ENCODE measurements at regions of chr12 and their contacts with region 1.

Region 1: GRCh38 chr12:119412811-119413794 is 78.6 kb downstream of the CCDC60 start:
- DNase-seq: peak; percentile 65 to 75 (median 73)
- ATAC-seq: peak; percentile 79
- H3K4me3 ChIP-seq: no peak overlapping the region
- H3K27ac ChIP-seq: no peak overlapping the region
- H3K4me1 ChIP-seq: no peaks in the 10 kb centered on the region
- H3K27me3 ChIP-seq: peaks cover 0 to 5% of the 10 kb centered on the region in 2 experiments; a peak in 2 of 5 replicates
- CTCF ChIP-seq: peak; percentile 76 to 87 (median 85)
- EP300 ChIP-seq: no peak
- POLR2A ChIP-seq: no peak
- RAD21 ChIP-seq: peak; percentile 51 to 77

Region 2: GRCh38 chr12:118689793-118690192 is 723.3 kb before region 1 on chr12:
- CTCF ChIA-PET with region 1: no interaction called
- POLR2A ChIA-PET with region 1: no interaction called
- in situ Hi-C with region 1: no loop called
- intact Hi-C with region 1: no loop called
- DNase-seq: no peak
- ATAC-seq: no peak
- H3K4me3 ChIP-seq: no peak overlapping the region
- H3K27ac ChIP-seq: no peak overlapping the region
- H3K4me1 ChIP-seq: no peaks in the 10 kb centered on the region
- H3K27me3 ChIP-seq: no peaks in the 10 kb centered on the region
- CTCF ChIP-seq: no peak
- EP300 ChIP-seq: no peak
- POLR2A ChIP-seq: no peak
- RAD21 ChIP-seq: no peak

Region 3: GRCh38 chr12:119020406-119021360 is 392.4 kb before region 1 on chr12:
- CTCF ChIA-PET with region 1: no interaction called
- POLR2A ChIA-PET with region 1: no interaction called
- in situ Hi-C with region 1: no loop called
- intact Hi-C with region 1: loop called (anchors 5 kb)
- DNase-seq: peak; percentile 72 to 83 (median 77)
- ATAC-seq: peak; percentile 96
- H3K4me3 ChIP-seq: no peak overlapping the region
- H3K27ac ChIP-seq: no peak overlapping the region
- H3K4me1 ChIP-seq: no peaks in the 10 kb centered on the region
- H3K27me3 ChIP-seq: no peaks in the 10 kb centered on the region
- CTCF ChIP-seq: peak; percentile 89 to 99 (median 97)
- EP300 ChIP-seq: no peak
- POLR2A ChIP-seq: no peak
- RAD21 ChIP-seq: peak in 1 of 2 experiments; percentile 39; a peak in 1 of 4 replicates

Region 4: GRCh38 chr12:119115296-119115905 is 297.7 kb before region 1 on chr12:
- CTCF ChIA-PET with region 1: interaction called, 4 read pairs
- POLR2A ChIA-PET with region 1: no interaction called
- in situ Hi-C with region 1: no loop called
- intact Hi-C with region 1: loop called (anchors 1 kb)
- DNase-seq: peak; percentile 53 to 75 (median 67)
- ATAC-seq: peak; percentile 67; the same call in 1 of the 3 replicates
- H3K4me3 ChIP-seq: no peak overlapping the region
- H3K27ac ChIP-seq: no peak overlapping the region
- H3K4me1 ChIP-seq: no peaks in the 10 kb centered on the region
- H3K27me3 ChIP-seq: no peaks in the 10 kb centered on the region
- CTCF ChIP-seq: peak; percentile 72 to 75 (median 73)
- EP300 ChIP-seq: no peak
- POLR2A ChIP-seq: no peak
- RAD21 ChIP-seq: peak; percentile 28 to 55; a peak in 3 of 4 replicates